ENCODE measurements at regions of chr15 and their contacts with region 1.

Region 1: GRCh38 chr15:69475769-69476358 is 23.2 kb downstream of the RPLP1 start:
- DNase-seq: peak; percentile 73 to 81
- ATAC-seq: peak; percentile 65 to 89 (median 80)
- H3K4me3 ChIP-seq: no peak overlapping the region
- H3K27ac ChIP-seq: no peak overlapping the region
- H3K4me1 ChIP-seq: peaks cover 0 to 3% (median 0%) of the 10 kb centered on the region in 9 donors
- H3K27me3 ChIP-seq: peaks cover 0 to 8% (median 0%) of the 10 kb centered on the region in 7 donors
- CTCF ChIP-seq: peak; percentile 82 to 97 (median 94)

Region 2: GRCh38 chr15:69462493-69463181 is 13.2 kb before region 1 on chr15:
- intact Hi-C with region 1: no loop called
- DNase-seq: peak; percentile 95 to 97
- ATAC-seq: peak; percentile 93 to 98 (median 96)
- H3K4me3 ChIP-seq: peak overlapping the region; percentile 21 to 68 (median 56)
- H3K27ac ChIP-seq: peak overlapping the region; percentile 76 to 98 (median 90)
- H3K4me1 ChIP-seq: peaks cover 0 to 50% (median 27%) of the 10 kb centered on the region in 9 donors
- H3K27me3 ChIP-seq: no peaks in the 10 kb centered on the region
- CTCF ChIP-seq: peak; percentile 75 to 96 (median 90)

Region 3: GRCh38 chr15:69652751-69653305 is 177.0 kb after region 1 on chr15:
- intact Hi-C with region 1: loop called in 2 of 10 experiments (anchors 5 to 10 kb)
- DNase-seq: no peak
- ATAC-seq: peak in 1 of 8 donors; percentile 51
- H3K4me3 ChIP-seq: no peak overlapping the region
- H3K27ac ChIP-seq: no peak overlapping the region
- H3K4me1 ChIP-seq: peaks cover 0 to 12% (median 0%) of the 10 kb centered on the region in 9 donors
- H3K27me3 ChIP-seq: peaks cover 0 to 70% (median 49%) of the 10 kb centered on the region in 7 donors
- CTCF ChIP-seq: peak in 4 of 9 donors; percentile 26 to 31 (median 28)

Region 4: GRCh38 chr15:69794645-69795461 is 319.0 kb after region 1 on chr15:
- intact Hi-C with region 1: loop called in 1 of 10 experiments (anchors 5 kb)
- DNase-seq: peak in 1 of 2 donors; percentile 23
- ATAC-seq: peak; percentile 69 to 78 (median 74)
- H3K4me3 ChIP-seq: no peak overlapping the region
- H3K27ac ChIP-seq: peak overlapping the region in 9 of 10 donors; percentile 51 to 87 (median 73)
- H3K4me1 ChIP-seq: peaks cover 7 to 32% (median 21%) of the 10 kb centered on the region in 9 donors
- H3K27me3 ChIP-seq: peaks cover 0 to under 1% (median 0%) of the 10 kb centered on the region in 7 donors
- CTCF ChIP-seq: no peak

Region 5: GRCh38 chr15:70077188-70078147 is 601.6 kb after region 1 on chr15:
- intact Hi-C with region 1: no loop called
- DNase-seq: peak in 1 of 2 donors; percentile 45
- ATAC-seq: peak; percentile 54 to 94 (median 77)
- H3K4me3 ChIP-seq: no peak overlapping the region
- H3K27ac ChIP-seq: no peak overlapping the region
- H3K4me1 ChIP-seq: peaks cover 0 to 44% (median 16%) of the 10 kb centered on the region in 9 donors
- H3K27me3 ChIP-seq: no peaks in the 10 kb centered on the region
- CTCF ChIP-seq: no peak

Region 6: DNA sequence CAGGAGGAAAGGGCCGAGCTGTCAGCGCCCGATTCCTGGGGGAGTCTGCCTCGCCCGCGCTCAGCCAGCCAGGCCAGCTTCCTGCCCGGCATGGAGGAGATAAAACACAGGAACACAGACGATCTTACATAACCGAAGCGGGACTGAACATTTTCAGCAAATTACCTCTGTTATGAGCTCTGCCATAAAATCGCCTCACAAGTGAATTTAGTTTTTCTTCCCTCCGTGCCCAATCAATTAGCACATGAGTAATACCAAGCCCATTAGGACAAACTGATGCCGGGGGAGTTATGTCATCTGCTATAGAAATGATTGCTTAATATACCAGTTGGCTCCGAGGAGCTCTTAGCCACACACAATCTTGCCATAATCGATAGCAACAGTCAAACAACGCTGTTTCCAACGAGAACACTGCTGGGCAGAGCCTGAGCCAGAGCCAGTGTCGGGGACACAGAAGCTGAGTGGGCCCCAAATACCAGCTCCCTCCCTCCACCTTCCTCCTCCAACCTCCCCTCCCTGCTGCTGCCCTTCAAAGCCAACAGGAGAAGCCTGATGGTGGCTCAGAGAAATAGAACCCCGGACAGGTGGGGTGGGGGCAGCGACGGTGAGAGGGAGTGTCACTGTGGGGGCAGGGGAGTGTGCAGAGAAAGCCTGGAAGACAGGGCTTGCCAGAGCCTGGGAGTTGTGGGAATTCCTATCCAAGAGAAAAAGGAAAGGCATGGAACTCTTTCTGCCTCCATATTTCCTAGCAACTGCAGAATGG is 901.2 kb after region 1 on chr15:
- intact Hi-C with region 1: loop called in 1 of 10 experiments (anchors 10 kb)
- DNase-seq: peak; percentile 68 to 78
- ATAC-seq: peak; percentile 82 to 91 (median 88)
- H3K4me3 ChIP-seq: peak overlapping the region in 6 of 10 donors; percentile 0 to 24 (median 15)
- H3K27ac ChIP-seq: peak overlapping the region in 5 of 10 donors; percentile 5 to 58 (median 22)
- H3K4me1 ChIP-seq: peaks cover 12 to 34% (median 29%) of the 10 kb centered on the region in 9 donors
- H3K27me3 ChIP-seq: peaks cover 0 to 12% (median 5%) of the 10 kb centered on the region in 7 donors
- CTCF ChIP-seq: no peak

Measured in heart right ventricle (tissue), 16 donors.